HEK293 (cell line): ENCODE measurements at regions of chr1 and their contacts with region 1.

Region 1: GRCh38 chr1:16078925-16079656 is 5.6 kb upstream of the FAM131C start:
- H3K4me3 ChIP-seq: no peak overlapping the region
- H3K27ac ChIP-seq: no peak overlapping the region
- H3K4me1 ChIP-seq: no peaks in the 10 kb centered on the region
- CTCF ChIP-seq: peak; percentile 92

Region 2: DNA sequence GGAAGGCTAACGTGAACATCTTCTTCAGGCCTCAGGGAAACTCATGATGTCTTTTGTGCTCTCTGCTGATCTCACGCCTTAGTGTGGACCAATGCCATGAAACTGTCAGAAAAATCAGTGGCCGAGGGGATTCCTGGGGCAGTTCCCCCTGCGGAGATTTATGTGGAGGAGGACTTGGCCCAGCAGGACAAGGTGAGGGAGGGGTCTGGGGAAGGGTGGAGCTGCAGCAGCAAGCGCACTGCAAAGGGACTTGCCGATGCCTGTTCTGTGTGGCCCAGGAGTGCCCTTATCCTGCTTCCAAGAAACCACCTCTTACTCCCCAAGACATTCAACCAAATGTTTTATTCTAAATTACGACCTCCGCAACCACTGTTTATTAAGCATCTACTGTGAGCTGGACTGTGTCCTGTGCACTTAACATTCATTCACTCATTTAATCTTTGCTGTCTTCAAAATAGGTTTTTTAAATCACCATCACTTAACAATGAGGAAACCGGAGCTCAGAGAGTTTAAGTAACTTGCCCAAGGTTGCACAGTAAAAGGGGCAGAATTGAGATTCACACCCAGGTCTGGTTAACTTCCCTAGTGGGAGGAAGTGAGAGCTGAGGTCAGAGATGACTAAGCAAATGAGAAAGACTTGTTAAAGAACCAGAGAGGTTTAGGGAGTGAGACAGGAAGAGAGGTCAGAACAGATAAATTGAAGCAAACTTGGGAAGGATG is 782.3 kb before region 1 on chr1:
- CTCF ChIA-PET with region 1: no interaction called
- POLR2A ChIA-PET with region 1: no interaction called
- H3K4me3 ChIP-seq: no peak overlapping the region
- H3K27ac ChIP-seq: no peak overlapping the region
- H3K4me1 ChIP-seq: no peaks in the 10 kb centered on the region
- CTCF ChIP-seq: no peak

Region 3: DNA sequence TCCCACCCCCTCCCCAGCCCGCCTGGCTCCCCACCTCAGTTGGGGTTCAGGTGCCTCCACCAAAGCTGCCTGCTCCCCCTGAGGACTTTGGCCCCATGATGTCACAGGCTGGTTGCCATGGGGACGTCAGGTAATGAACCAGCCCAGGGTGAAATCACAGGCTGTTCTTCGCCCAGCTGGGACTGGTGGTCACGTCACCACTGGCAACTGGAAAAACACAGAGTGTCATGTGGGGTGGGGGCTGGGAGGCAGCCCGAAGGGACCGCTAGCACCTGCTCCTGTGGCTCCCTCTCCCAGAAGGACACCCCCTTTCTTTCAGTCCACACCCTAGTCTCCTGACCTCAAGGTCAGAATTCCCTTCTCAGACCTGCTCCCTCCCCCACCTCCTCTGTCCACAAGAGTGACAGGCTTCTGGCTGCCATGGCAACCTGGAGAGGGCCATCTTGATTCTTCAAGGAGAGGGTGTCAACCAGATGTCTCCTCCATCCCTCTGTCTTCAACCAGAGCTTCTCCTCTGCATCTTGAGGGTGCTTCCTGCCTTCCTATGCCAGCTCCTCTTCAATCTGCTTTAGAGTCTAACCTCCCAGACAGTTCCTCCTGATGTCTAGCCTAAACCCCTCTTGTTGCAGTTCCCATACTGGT is 11.8 kb before region 1 on chr1:
- CTCF ChIA-PET with region 1: interaction called, 40 read pairs
- POLR2A ChIA-PET with region 1: no interaction called
- H3K4me3 ChIP-seq: no peak overlapping the region
- H3K27ac ChIP-seq: no peak overlapping the region
- H3K4me1 ChIP-seq: no peaks in the 10 kb centered on the region
- CTCF ChIP-seq: no peak

Region 4: DNA sequence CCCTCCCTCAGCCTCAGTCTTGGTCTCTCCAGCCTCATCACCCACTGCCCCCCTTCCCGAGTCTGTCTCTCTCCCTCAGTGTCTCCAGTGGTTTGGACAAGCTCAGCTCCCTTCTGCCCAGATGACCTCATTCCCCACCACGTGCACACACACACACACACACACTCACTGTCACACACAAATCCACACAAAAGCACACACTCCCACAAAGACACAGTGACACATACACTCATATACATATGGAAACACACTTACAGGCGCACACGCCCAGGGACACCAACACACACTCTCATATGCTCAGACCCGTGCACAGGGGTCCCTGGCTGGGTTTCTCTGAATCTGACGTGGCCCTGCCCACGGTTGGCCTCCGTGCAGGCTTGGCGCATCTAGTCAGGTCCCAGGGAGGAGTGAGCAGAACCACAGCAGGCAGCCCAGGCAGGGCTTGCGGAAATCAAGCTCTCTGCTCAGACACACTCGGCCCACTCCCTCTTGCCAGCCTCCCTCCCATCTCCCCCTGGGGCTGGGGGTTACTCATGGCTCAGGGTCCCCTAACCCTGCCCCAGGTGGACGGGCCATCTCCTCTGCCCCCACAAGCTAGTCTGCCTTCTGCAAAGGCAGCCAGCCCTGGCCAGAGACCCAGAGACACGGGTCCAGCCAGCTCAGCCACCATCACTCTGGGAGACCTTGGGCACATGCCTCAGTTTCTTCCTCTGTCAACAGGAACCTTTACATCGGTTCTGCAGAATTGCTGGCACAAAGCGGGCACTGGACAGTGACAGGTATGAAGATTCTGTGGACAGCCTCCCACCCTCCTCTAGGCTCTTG is 32.9 kb after region 1 on chr1:
- CTCF ChIA-PET with region 1: interaction called, 34 read pairs
- POLR2A ChIA-PET with region 1: interaction called, 3 read pairs
- H3K4me3 ChIP-seq: no peak overlapping the region
- H3K27ac ChIP-seq: no peak overlapping the region
- H3K4me1 ChIP-seq: no peaks in the 10 kb centered on the region
- CTCF ChIP-seq: no peak

Region 5: GRCh38 chr1:16146279-16147155 is 67.4 kb after region 1 on chr1:
- CTCF ChIA-PET with region 1: interaction called, 117 read pairs
- POLR2A ChIA-PET with region 1: interaction called, 5 read pairs
- H3K4me3 ChIP-seq: peak overlapping the region; percentile 14
- H3K27ac ChIP-seq: no peak overlapping the region; the same call in 1 of the 2 replicates
- H3K4me1 ChIP-seq: peaks cover 5% of the 10 kb centered on the region; the same call in 1 of the 2 replicates
- CTCF ChIP-seq: no peak

Region 6: GRCh38 chr1:16187748-16188401 is 108.8 kb after region 1 on chr1:
- CTCF ChIA-PET with region 1: interaction called, 427 read pairs
- POLR2A ChIA-PET with region 1: interaction called, 9 read pairs
- H3K4me3 ChIP-seq: no peak overlapping the region
- H3K27ac ChIP-seq: no peak overlapping the region
- H3K4me1 ChIP-seq: no peaks in the 10 kb centered on the region
- CTCF ChIP-seq: peak; percentile 94

Region 7: DNA sequence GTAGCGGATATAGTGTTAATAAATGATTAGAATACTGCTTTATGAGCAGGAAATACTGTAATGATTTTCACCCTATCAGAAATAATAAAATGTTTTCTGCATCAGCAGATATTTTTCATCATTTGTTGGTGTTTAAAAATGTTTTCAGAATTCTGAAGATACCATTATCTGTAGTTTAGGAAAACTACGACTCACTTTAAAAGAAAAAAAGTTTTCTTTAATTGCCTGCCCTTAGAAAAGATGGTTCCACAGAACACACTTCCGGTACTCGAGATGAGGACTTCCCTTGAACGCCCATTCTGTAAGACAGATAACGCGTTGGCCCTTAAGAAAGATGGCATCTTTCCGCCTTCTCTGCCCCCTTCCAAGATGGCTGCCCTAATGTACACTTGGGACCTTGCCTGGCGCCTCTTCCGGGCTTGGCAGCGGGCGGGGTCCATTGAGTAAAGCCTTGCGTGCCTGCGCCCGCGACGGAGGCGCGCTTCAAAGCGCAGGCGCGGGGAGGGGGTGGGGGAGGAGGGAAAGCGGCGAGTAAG is 287.7 kb after region 1 on chr1 and contains the start of gene SZRD1:
- CTCF ChIA-PET with region 1: interaction called, 38 read pairs
- POLR2A ChIA-PET with region 1: no interaction called
- H3K4me3 ChIP-seq: peak within 1 kb of the TSS; percentile 97
- H3K27ac ChIP-seq: peak within 1 kb of the TSS; percentile 93
- H3K4me1 ChIP-seq: peaks cover 9% of the 10 kb centered on the region
- CTCF ChIP-seq: no peak